ENCODE measurements at regions of chr9 and their contacts with region 1.

Region 1: GRCh38 chr9:28707616-28708015 is 1134.3 kb upstream of the C9orf72 start:
- DNase-seq: no peak
- ATAC-seq: no peak
- H3K4me3 ChIP-seq: no peak overlapping the region
- H3K27ac ChIP-seq: no peak overlapping the region
- H3K4me1 ChIP-seq: no peaks in the 10 kb centered on the region
- H3K27me3 ChIP-seq: no peaks in the 10 kb centered on the region
- CTCF ChIP-seq: no peak
- POLR2A ChIP-seq: no peak
- RAD21 ChIP-seq: no peak

Region 2: GRCh38 chr9:28688172-28688571 is 19.4 kb before region 1 on chr9:
- CTCF ChIA-PET with region 1: no interaction called
- POLR2A ChIA-PET with region 1: no interaction called
- dilution Hi-C with region 1: no loop called
- in situ Hi-C with region 1: no loop called
- intact Hi-C with region 1: loop called (anchors 1 kb)
- DNase-seq: no peak
- ATAC-seq: no peak
- H3K4me3 ChIP-seq: no peak overlapping the region
- H3K27ac ChIP-seq: no peak overlapping the region
- H3K4me1 ChIP-seq: no peaks in the 10 kb centered on the region
- H3K27me3 ChIP-seq: no peaks in the 10 kb centered on the region
- CTCF ChIP-seq: no peak
- POLR2A ChIP-seq: no peak
- RAD21 ChIP-seq: no peak

Region 3: GRCh38 chr9:28927711-28928110 is 220.1 kb after region 1 on chr9:
- CTCF ChIA-PET with region 1: no interaction called
- POLR2A ChIA-PET with region 1: no interaction called
- dilution Hi-C with region 1: no loop called
- in situ Hi-C with region 1: no loop called
- intact Hi-C with region 1: no loop called
- DNase-seq: no peak
- ATAC-seq: no peak
- H3K4me3 ChIP-seq: no peak overlapping the region
- H3K27ac ChIP-seq: no peak overlapping the region
- H3K4me1 ChIP-seq: no peaks in the 10 kb centered on the region
- H3K27me3 ChIP-seq: no peaks in the 10 kb centered on the region
- CTCF ChIP-seq: no peak
- POLR2A ChIP-seq: no peak
- RAD21 ChIP-seq: no peak